Left colon (tissue), 2 donors: ENCODE measurements at regions of chr19 and their contacts with region 1.

Region 1: GRCh38 chr19:28466107-28467045 is 746.6 kb downstream of the UQCRFS1 start:
- DNase-seq: peak; percentile 48 to 87
- ATAC-seq: peak; percentile 30

Region 2: GRCh38 chr19:28358633-28359032 is 107.7 kb before region 1 on chr19:
- intact Hi-C with region 1: no loop called
- DNase-seq: no peak
- ATAC-seq: no peak

Region 3: GRCh38 chr19:28419312-28419711 is 47.1 kb before region 1 on chr19:
- intact Hi-C with region 1: no loop called
- DNase-seq: no peak
- ATAC-seq: no peak

Region 4: GRCh38 chr19:28633319-28634018 is 167.1 kb after region 1 on chr19:
- intact Hi-C with region 1: loop called in 1 of 2 experiments (anchors 5 kb)
- DNase-seq: peak in 1 of 2 donors; percentile 49
- ATAC-seq: peak; percentile 97

Region 5: GRCh38 chr19:28710278-28710677 is 243.9 kb after region 1 on chr19:
- intact Hi-C with region 1: loop called in 1 of 2 experiments (anchors 10 kb)
- DNase-seq: no peak
- ATAC-seq: peak; percentile 51

Region 6: DNA sequence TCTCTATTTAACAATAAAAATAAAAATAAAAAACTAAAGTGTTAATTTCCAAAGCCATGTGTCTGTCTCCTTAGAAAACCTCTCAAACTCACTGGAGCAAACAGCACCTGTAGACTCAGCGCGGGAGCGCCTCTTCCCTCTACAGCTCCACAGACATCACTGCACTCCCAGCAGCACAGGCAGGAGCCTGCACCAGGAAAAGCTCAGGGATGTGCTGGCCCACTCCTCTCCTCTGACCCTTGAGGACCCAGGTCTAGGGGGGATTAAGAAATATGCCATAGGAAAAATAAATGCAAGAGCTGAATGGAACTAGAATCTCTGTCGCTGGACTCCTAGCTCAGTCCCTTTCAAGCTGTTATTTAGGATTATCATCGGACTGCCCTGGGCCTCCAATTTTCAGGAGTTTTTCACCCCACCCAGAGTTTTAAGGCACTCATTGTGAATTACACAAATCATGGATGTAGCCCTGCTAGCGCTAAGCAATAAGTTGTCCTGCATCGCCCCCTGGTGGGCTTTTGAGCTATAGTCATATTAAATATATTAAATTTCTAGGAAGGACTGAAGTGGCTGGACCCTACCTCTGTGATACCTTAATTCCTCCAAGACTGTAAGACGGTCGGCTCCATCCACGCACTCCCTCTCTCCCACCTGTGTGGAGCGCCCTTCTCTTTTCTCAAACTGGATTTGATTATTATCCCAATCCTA is 412.6 kb after region 1 on chr19:
- intact Hi-C with region 1: loop called in 1 of 2 experiments (anchors 10 kb)
- DNase-seq: peak; percentile 29 to 74
- ATAC-seq: peak; percentile 58